Tibial artery (tissue), 4 donors: ENCODE measurements at regions of chr1 and their contacts with region 1.

Region 1: DNA sequence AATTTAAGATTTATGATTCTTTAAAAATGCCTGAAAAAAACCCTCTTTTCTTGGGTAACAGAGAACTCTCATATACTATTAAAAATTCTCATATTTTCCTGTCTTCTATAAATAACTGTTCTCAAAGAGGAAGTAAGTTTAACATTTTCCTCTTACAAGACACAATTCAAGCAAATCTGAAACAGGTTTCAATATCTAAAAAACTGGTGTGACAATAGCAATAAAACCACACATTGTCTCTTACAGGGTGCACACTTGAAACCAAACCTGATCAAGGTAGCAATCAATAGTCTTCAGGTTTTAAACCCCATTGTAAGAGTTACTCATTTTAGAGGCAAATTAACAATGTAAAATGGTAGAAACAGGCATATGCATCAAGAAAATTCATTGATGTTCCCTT is 28.0 kb downstream of the FUBP1 start:
- DNase-seq: no peak
- H3K4me3 ChIP-seq: no peak overlapping the region
- H3K27ac ChIP-seq: no peak overlapping the region
- H3K4me1 ChIP-seq: peaks cover 0 to 46% (median 13%) of the 10 kb centered on the region in 4 donors
- H3K27me3 ChIP-seq: no peaks in the 10 kb centered on the region
- CTCF ChIP-seq: no peak

Region 2: GRCh38 chr1:78114034-78114956 is 163.4 kb after region 1 on chr1:
- intact Hi-C with region 1: loop called (anchors 10 kb)
- DNase-seq: no peak
- H3K4me3 ChIP-seq: no peak overlapping the region
- H3K27ac ChIP-seq: peak overlapping the region in 1 of 2 donors; percentile 42
- H3K4me1 ChIP-seq: peaks cover 0 to 10% (median 3%) of the 10 kb centered on the region in 4 donors
- H3K27me3 ChIP-seq: no peaks in the 10 kb centered on the region
- CTCF ChIP-seq: peak; percentile 78 to 84